Right ventricle myocardium superior (tissue), 1 donor: ENCODE measurements at regions of chr12 and their contacts with region 1.

Region 1: GRCh38 chr12:116599285-116600136 is 40.3 kb downstream of the MAP1LC3B2 start:
- DNase-seq: peak; percentile 92
- ATAC-seq: peak; percentile 91

Region 2: GRCh38 chr12:115998119-115998633 is 601.3 kb before region 1 on chr12:
- intact Hi-C with region 1: loop called (anchors 5 kb)
- DNase-seq: no peak
- ATAC-seq: peak; percentile 53

Region 3: DNA sequence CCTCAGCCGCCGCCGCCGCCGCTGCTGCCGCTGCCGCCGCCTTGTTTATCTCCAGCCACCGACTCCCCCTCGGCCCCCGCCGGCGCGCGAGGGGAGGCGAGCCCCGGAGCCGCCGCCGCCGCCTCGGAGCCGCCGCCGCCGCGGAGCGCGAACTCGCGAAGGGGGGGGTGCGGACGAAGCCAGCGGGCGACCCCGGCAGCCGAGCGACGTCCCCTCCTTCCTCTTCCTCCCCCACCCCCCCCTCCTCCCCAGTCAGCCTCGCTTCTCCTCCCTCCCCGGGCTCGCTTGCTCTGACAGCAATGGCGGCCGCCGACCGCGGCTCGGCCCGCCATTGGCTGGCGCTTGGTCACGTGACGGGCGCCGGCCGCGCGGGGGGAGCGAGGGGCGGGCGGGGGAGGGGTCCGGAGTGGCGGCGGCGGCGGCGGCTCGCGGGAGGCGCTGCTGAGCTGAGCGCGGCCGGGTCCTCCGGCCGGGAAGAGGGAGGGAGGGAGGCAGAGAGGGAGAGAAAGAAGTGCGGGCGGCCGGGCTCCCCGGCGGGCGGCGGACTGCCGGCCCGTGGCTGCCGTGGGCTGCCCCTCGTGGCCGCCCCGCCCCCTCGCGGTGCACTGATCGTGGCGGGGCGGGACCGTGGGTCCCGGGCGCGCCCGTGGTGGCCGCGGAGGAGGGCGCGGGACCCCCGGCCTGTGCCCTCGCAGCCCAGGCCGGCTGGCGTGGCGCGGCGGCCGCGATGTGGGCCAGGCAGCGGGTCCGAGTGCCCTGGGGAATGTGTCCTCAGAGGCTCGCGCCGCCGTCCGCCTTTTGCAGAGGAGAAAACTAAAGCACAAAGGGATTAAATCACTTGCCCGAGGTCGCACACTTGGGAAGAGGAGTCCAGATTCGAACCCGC is 321.9 kb before region 1 on chr12 and contains the start of gene MED13L:
- intact Hi-C with region 1: loop called (anchors 5 kb)
- DNase-seq: peak; percentile 93
- ATAC-seq: peak; percentile 93
- total RNA-seq, gene MED13L: 57.7 TPM

Region 4: DNA sequence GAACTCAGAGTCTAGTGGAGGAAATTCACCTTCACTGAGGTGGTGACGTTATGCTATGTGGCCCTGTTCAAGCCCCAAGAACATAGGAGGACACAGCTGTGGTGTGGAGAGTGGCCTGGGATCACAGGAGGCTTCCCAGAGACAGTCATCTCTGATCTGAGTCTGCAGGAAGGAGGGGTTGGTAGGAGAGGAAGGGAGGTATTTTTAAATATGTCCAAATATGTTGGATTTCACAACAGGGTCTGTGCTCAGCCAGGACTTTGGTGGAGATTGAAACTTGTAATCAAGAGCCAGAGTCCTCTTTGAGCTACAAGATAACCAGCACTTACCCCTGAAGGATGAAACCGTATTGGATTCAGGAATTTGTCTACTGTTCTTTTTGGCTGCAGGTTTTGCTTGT is 295.6 kb before region 1 on chr12:
- intact Hi-C with region 1: no loop called
- DNase-seq: no peak
- ATAC-seq: peak; percentile 73

Region 5: DNA sequence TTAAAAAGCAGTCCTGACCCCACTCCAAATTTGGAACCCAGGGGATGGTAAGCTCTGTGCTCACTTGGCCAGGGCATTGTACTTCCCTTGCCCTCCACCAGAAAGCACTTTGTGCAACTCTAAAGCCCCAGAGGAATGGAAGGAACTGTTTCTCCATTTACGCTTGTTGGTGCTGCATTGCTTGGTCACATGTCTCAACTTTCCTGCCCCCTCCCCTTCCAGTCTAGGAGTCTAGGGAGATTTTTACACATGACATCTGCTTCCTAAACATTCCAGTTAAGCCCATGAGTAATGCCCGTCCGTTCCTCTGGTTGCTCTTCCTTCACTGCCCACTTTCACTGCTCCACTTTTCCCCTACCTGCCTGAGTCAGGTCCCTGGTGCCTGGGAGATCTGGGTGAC is 133.0 kb before region 1 on chr12:
- intact Hi-C with region 1: loop called (anchors 10 kb)
- DNase-seq: no peak
- ATAC-seq: no peak

Region 6: DNA sequence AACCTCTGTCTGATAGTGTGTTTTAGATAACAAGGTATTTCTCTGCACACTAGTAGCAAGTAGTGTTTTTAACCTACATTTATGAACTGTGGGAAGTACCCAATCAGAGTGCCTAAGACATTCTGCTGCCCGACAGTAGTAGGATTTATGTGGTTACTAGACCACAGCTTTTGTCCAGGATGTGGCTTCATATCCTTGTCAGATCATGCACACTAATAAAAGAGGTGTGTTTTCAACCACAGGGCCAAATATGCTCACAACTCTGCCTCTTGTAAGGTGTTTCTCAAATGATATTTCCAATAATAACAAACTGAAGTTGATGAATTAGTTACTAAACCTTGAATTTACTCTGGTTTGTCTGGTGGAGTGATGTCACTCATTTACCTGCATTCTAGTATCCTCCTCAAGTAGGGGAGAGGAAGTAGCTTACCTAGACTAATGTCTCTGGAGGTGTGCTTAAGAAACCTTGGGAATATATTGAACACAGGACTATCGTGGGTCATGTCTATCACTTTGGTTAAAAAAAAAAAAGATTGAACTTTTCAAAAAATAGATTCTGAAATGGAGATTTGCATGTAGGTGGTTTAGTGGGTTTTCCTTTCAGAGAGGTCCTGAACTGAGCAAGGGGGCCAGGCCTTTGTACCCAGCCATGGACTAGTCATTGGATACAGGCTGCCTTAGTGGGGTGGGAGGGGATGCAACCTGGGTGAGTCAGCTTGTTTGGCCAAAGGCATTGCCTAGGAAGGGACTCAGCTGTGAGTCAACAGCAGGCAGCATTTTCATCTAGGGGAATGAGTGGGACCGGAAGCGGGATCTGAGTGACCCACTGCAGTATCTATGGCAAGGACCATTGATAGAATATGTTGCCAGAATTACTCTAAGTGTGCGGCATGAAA is 325.3 kb after region 1 on chr12:
- intact Hi-C with region 1: no loop called
- DNase-seq: no peak
- ATAC-seq: no peak